ENCODE measurements at regions of chr3 and their contacts with region 1.

Region 1: GRCh38 chr3:59575113-59576001 is 525.5 kb upstream of the CFAP20DC start:
- DNase-seq: peak; percentile 41
- H3K4me3 ChIP-seq: no peak overlapping the region
- H3K27ac ChIP-seq: no peak overlapping the region
- H3K4me1 ChIP-seq: no peaks in the 10 kb centered on the region
- H3K27me3 ChIP-seq: no peaks in the 10 kb centered on the region
- CTCF ChIP-seq: peak; percentile 84
- POLR2A ChIP-seq: no peak

Region 2: GRCh38 chr3:58824285-58824684 is 751.1 kb before region 1 on chr3:
- CTCF ChIA-PET with region 1: interaction called, 9 read pairs
- POLR2A ChIA-PET with region 1: no interaction called
- dilution Hi-C with region 1: no loop called
- intact Hi-C with region 1: loop called (anchors 10 kb)
- DNase-seq: peak; percentile 78
- H3K4me3 ChIP-seq: no peak overlapping the region
- H3K27ac ChIP-seq: no peak overlapping the region
- H3K4me1 ChIP-seq: no peaks in the 10 kb centered on the region
- H3K27me3 ChIP-seq: no peaks in the 10 kb centered on the region
- CTCF ChIP-seq: peak; percentile 70 to 74
- POLR2A ChIP-seq: no peak

Region 3: DNA sequence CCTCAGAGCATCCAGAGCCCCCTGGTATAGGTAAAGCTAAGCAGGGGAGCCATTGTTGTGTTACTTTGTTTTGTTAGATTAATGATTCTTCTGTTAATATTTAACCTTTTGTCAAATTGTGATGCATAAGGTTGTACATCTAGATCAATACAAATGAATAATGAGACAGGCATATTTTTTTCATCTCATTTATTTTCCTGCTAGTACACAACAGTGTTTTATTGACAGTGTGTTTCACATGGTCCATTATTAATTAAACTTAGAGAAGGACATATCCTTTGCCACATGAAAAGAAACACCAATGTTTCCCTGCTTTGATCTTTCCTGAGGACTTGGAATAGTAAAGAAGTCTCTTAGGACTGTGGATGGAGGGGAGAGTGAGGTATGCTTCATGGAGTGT is 18.0 kb after region 1 on chr3:
- CTCF ChIA-PET with region 1: interaction called, 13 read pairs
- POLR2A ChIA-PET with region 1: no interaction called
- dilution Hi-C with region 1: no loop called
- intact Hi-C with region 1: no loop called
- DNase-seq: no peak
- H3K4me3 ChIP-seq: no peak overlapping the region
- H3K27ac ChIP-seq: no peak overlapping the region
- H3K4me1 ChIP-seq: no peaks in the 10 kb centered on the region
- H3K27me3 ChIP-seq: no peaks in the 10 kb centered on the region
- CTCF ChIP-seq: no peak
- POLR2A ChIP-seq: no peak

Region 4: GRCh38 chr3:59632760-59633573 is 57.6 kb after region 1 on chr3:
- CTCF ChIA-PET with region 1: no interaction called
- POLR2A ChIA-PET with region 1: no interaction called
- dilution Hi-C with region 1: no loop called
- intact Hi-C with region 1: no loop called
- DNase-seq: no peak
- H3K4me3 ChIP-seq: no peak overlapping the region
- H3K27ac ChIP-seq: no peak overlapping the region
- H3K4me1 ChIP-seq: no peaks in the 10 kb centered on the region
- H3K27me3 ChIP-seq: no peaks in the 10 kb centered on the region
- CTCF ChIP-seq: no peak
- POLR2A ChIP-seq: no peak

Region 5: GRCh38 chr3:59809710-59810444 is 234.5 kb after region 1 on chr3:
- CTCF ChIA-PET with region 1: no interaction called
- POLR2A ChIA-PET with region 1: no interaction called
- dilution Hi-C with region 1: no loop called
- intact Hi-C with region 1: no loop called
- DNase-seq: no peak
- H3K4me3 ChIP-seq: no peak overlapping the region
- H3K27ac ChIP-seq: no peak overlapping the region
- H3K4me1 ChIP-seq: no peaks in the 10 kb centered on the region
- H3K27me3 ChIP-seq: no peaks in the 10 kb centered on the region
- CTCF ChIP-seq: no peak
- POLR2A ChIP-seq: no peak

Region 6: GRCh38 chr3:61381745-61382392 is 1806.5 kb after region 1 on chr3:
- CTCF ChIA-PET with region 1: interaction called, 36 read pairs
- POLR2A ChIA-PET with region 1: no interaction called
- dilution Hi-C with region 1: no loop called
- intact Hi-C with region 1: no loop called
- DNase-seq: peak; percentile 33
- H3K4me3 ChIP-seq: no peak overlapping the region
- H3K27ac ChIP-seq: no peak overlapping the region
- H3K4me1 ChIP-seq: peaks cover 3% of the 10 kb centered on the region
- H3K27me3 ChIP-seq: no peaks in the 10 kb centered on the region
- CTCF ChIP-seq: peak; percentile 31 to 38
- POLR2A ChIP-seq: no peak

Region 7: GRCh38 chr3:61530355-61530754 is 1955.0 kb after region 1 on chr3:
- CTCF ChIA-PET with region 1: interaction called, 11 read pairs
- POLR2A ChIA-PET with region 1: no interaction called
- dilution Hi-C with region 1: no loop called
- intact Hi-C with region 1: loop called (anchors 5 kb)
- DNase-seq: peak; percentile 51
- H3K4me3 ChIP-seq: no peak overlapping the region
- H3K27ac ChIP-seq: no peak overlapping the region
- H3K4me1 ChIP-seq: no peaks in the 10 kb centered on the region
- H3K27me3 ChIP-seq: peaks cover 4 to 5% of the 10 kb centered on the region in 2 experiments
- CTCF ChIP-seq: peak; percentile 33 to 51
- POLR2A ChIP-seq: no peak